Panc1 (cell line): ENCODE measurements at regions of chrX and their contacts with region 1.

Region 1: DNA sequence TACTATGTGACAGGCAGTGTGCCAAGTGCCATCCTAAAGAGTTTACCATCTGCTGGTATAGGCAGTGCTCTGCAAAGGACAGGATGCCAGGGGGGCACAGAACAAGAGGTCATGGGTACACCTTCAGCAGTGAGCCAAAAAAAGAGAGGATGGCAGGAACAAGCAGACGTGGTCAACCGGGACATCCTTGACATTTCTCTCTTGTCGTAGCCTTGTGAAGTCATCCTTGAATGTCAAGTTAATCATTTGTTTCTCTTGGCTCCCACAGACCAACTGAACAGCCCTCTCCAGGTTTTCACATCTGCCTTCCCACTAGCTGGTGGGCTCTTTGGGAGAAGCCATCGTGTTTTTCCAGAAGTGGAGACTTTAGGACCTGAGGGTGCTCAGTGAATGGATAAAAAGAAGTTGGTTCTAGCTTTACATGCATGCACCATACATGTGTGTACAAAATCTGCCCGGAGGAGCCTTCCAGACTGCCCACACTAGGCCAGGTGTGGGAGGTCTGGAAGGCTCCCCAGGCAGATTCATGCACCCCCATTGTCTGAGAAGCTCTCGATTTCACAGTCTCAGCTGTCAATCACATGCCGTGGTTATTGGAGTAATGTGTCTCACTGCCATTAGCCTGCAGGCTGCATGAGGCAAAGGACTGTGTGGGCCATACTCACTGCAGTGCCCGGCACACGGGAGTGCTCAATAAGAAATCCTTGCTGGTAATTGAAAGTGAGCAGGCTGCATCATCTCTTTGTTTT is 16.4 kb downstream of the PNMA6F start:
- DNase-seq: no peak
- ATAC-seq: no peak
- H3K4me3 ChIP-seq: no peak overlapping the region
- H3K27ac ChIP-seq: no peak overlapping the region
- H3K4me1 ChIP-seq: no peaks in the 10 kb centered on the region
- H3K27me3 ChIP-seq: peaks cover 6% of the 10 kb centered on the region
- CTCF ChIP-seq: no peak

Region 2: DNA sequence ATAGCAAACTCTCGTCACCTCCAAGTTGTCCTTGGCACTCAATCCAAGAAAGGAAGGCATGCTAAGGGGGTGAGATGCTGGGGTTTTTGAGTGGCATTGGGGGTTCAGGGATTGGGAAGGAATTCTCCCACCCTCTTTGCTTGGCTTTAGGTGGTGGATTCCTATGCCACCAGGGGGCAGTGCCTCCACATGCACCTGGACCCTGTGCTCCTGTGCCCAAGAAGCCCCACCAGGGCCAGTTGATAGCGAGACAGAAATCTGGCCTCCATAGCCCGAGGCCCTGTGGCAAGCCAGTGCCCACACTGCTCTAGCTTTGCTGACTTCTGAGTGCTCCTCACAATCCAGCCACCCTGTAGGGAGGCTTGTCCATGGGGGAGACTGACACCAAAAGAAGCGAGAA is 1591.3 kb before region 1 on chrX:
- CTCF ChIA-PET with region 1: no interaction called
- POLR2A ChIA-PET with region 1: interaction called, 14 read pairs
- in situ Hi-C with region 1: no loop called
- intact Hi-C with region 1: no loop called
- DNase-seq: peak; percentile 5
- ATAC-seq: peak; percentile 93
- H3K4me3 ChIP-seq: no peak overlapping the region
- H3K27ac ChIP-seq: no peak overlapping the region
- H3K4me1 ChIP-seq: no peaks in the 10 kb centered on the region
- H3K27me3 ChIP-seq: no peaks in the 10 kb centered on the region
- CTCF ChIP-seq: peak; percentile 78

Region 3: DNA sequence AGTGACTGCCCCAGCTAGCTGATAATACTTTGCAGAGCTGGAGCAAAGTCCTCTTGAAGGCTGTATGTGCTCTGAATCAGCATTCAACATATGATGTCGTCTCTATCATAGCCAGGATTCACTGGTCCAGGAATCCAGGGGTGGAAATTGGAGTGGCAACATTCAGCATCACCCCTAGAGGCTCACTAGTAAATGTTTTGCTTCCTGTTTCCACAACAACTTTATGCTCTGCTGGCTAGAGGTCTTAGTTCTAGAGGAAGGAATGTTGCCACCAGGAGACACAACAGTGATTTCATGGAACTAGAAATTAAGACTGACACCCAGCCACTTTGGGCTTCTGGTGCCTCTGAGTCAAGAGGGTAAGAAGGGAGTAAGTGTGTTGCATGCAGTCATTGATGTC is 114.8 kb before region 1 on chrX:
- CTCF ChIA-PET with region 1: no interaction called
- POLR2A ChIA-PET with region 1: no interaction called
- in situ Hi-C with region 1: no loop called
- intact Hi-C with region 1: no loop called
- DNase-seq: no peak
- ATAC-seq: no peak
- H3K4me3 ChIP-seq: no peak overlapping the region
- H3K27ac ChIP-seq: no peak overlapping the region
- H3K4me1 ChIP-seq: no peaks in the 10 kb centered on the region
- H3K27me3 ChIP-seq: peaks cover 2% of the 10 kb centered on the region
- CTCF ChIP-seq: no peak